ENCODE measurements at regions of chr11 and their contacts with region 1.

Region 1: GRCh38 chr11:113431746-113432145 is 43.5 kb downstream of the DRD2 start:
- DNase-seq: no peak
- H3K4me3 ChIP-seq: no peak overlapping the region
- H3K27ac ChIP-seq: no peak overlapping the region
- H3K4me1 ChIP-seq: no peaks in the 10 kb centered on the region
- H3K27me3 ChIP-seq: peaks cover 41% of the 10 kb centered on the region
- CTCF ChIP-seq: no peak

Region 2: DNA sequence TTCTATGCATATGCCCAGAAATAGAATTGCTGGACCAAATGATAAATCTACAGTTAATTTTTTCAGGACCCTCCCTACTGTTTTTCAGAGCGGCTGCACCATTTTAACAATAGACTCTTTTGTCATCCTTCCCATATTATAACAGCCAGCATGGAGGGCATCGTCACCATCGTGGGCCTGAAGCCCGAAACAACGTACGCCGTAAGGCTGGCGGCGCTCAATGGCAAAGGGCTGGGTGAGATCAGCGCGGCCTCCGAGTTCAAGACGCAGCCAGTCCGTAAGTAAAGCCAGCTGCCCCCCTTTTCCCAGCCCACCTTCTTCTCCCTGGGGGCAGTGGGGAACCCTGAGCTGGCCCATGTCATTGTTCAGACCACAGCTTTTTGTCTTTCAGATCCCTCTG is 196.9 kb before region 1 on chr11:
- CTCF ChIA-PET with region 1: no interaction called
- POLR2A ChIA-PET with region 1: no interaction called
- intact Hi-C with region 1: no loop called
- DNase-seq: no peak
- H3K4me3 ChIP-seq: no peak overlapping the region
- H3K27ac ChIP-seq: no peak overlapping the region
- H3K4me1 ChIP-seq: no peaks in the 10 kb centered on the region
- H3K27me3 ChIP-seq: peaks cover 31% of the 10 kb centered on the region
- CTCF ChIP-seq: no peak

Region 3: DNA sequence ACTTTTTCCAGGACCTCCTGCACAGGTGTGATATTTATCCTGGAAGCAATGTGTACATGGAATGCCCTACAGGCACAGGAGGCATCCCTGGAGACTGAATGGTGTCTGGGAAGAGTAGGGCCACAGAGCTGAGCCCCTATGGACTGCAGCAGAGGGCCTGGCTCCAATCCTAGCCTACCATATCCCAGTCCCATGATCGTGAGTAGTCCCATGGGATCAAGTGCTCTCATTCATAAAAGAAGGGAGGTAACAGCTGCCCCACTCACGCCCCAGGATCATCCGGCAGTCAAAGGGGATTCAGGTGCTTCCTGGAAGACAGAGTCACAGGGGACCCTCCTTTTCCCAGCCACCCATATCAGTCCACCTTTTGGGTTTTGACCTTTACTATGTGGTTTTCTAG is 20.2 kb before region 1 on chr11:
- CTCF ChIA-PET with region 1: no interaction called
- POLR2A ChIA-PET with region 1: interaction called, 11 read pairs
- intact Hi-C with region 1: no loop called
- DNase-seq: no peak
- H3K4me3 ChIP-seq: no peak overlapping the region
- H3K27ac ChIP-seq: no peak overlapping the region
- H3K4me1 ChIP-seq: no peaks in the 10 kb centered on the region
- H3K27me3 ChIP-seq: peaks cover 100% of the 10 kb centered on the region
- CTCF ChIP-seq: no peak